ENCODE measurements at regions of chr19 and their contacts with region 1.

Region 1: DNA sequence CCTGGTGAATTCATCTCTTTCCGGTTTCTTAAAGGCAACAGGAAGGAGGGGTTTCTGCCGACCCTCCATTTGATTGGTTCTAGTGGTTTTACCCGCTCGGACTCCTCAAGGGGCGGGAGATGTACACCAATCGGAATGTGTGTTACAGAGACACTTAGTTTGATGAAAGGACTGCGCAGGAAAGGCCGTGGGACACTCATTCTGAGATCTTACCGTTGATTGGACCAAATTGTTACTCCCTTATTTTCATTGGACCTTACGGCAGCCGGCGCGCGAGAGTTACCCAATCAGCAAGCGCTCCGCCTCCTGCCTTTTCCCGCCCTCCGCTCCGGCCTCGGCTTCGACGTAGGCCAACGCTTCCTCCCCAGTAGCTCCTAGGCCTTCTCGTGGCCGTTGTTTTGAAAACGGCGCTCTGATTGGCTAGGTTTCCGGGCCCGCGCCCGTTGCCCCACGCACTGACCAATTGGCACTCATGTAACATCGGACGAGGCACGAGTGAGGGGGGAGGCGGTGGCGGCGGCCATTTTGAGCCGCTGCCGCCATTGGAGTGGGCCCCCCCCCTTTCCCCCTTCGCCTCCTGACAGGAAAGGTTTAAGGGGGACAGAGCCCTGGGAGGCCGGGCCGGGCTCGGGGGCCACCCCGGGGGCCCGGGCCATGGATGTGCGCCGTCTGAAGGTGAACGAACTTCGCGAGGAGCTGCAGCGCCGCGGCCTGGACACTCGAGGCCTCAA is at the start of gene HNRNPUL1:
- DNase-seq: peak; percentile 98
- H3K4me3 ChIP-seq: peak within 1 kb of the TSS; percentile 83 to 86
- H3K27ac ChIP-seq: peak within 1 kb of the TSS; percentile 95 to 96
- H3K4me1 ChIP-seq: peaks cover 11 to 12% of the 10 kb centered on the region in 2 experiments; a peak in 2 of 4 replicates
- H3K27me3 ChIP-seq: no peaks in the 10 kb centered on the region
- CTCF ChIP-seq: peak; percentile 40
- EP300 ChIP-seq: peak; percentile 15 to 21; a peak in 2 of 4 replicates
- RAD21 ChIP-seq: no peak
- polyA plus RNA-seq, gene HNRNPUL1: 34.2 and 41.5 TPM in 2 replicates

Region 2: DNA sequence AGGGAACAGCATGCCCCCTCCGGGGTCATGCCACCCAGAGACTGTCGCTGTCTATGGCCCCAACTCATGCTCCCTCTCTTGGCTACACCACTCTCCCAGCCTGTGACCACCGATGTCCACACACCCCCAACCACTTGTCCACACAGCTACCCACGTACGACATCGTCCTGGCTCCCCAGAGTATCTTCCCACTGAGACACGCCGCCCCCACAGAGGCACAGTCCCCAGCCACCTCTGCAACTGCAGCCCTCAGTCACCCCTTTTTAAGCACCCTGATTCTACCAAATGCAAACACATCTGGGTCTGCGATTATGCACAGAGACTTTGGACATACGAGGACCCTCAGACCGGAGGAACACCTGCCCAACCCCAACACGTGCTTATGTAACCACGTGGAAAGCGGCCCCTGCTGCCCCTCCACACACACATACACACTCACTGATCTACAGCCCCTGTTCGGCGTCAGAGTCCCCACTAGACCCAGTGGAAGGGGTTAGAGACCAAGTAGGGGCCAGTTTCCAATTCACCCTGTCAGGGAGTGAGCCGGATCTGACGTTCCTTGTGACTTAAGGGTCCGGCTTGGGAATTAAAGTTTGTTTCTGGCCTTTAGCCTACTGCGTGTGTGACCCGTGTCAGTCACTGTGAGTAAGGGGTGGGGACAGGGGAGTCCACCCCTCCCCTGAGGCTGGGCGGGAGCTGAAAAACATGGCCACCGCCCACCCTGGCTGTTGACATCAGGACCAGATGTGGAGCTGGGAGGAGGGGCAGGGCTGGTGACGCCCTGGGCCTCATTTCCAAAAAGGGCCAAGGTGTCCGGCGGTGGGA is 56.9 kb before region 1 on chr19:
- CTCF ChIA-PET with region 1: interaction called, 61 read pairs
- POLR2A ChIA-PET with region 1: no interaction called
- DNase-seq: no peak
- H3K4me3 ChIP-seq: no peak overlapping the region
- H3K27ac ChIP-seq: no peak overlapping the region
- H3K4me1 ChIP-seq: no peaks in the 10 kb centered on the region
- H3K27me3 ChIP-seq: no peaks in the 10 kb centered on the region
- CTCF ChIP-seq: no peak
- EP300 ChIP-seq: no peak
- RAD21 ChIP-seq: no peak

Region 3: GRCh38 chr19:41238244-41238643 is 25.8 kb before region 1 on chr19:
- CTCF ChIA-PET with region 1: no interaction called
- POLR2A ChIA-PET with region 1: no interaction called
- DNase-seq: no peak
- H3K4me3 ChIP-seq: no peak overlapping the region
- H3K27ac ChIP-seq: no peak overlapping the region
- H3K4me1 ChIP-seq: no peaks in the 10 kb centered on the region
- H3K27me3 ChIP-seq: no peaks in the 10 kb centered on the region
- CTCF ChIP-seq: no peak
- EP300 ChIP-seq: no peak
- RAD21 ChIP-seq: no peak